ENCODE measurements at regions of chr9 and their contacts with region 1.

Region 1: GRCh38 chr9:37197158-37198038 is 77.0 kb downstream of the ZCCHC7 start:
- DNase-seq: peak in 4 of 9 donors; percentile 5 to 17 (median 14)
- ATAC-seq: peak; percentile 58
- H3K4me3 ChIP-seq: no peak overlapping the region
- H3K4me3 Mint-ChIP-seq: peak overlapping the region in 9 of 10 donors; percentile 12 to 72 (median 46)
- H3K27ac ChIP-seq: peak overlapping the region; percentile 22
- H3K27ac Mint-ChIP-seq: peak overlapping the region in 7 of 9 donors; percentile 2 to 93 (median 49)
- H3K4me1 ChIP-seq: peaks cover 0 to 19% of the 10 kb centered on the region in 2 donors
- H3K4me1 Mint-ChIP-seq: peaks cover 39 to 68% (median 59%) of the 10 kb centered on the region in 7 donors
- H3K27me3 ChIP-seq: no peaks in the 10 kb centered on the region
- H3K27me3 Mint-ChIP-seq: no peaks in the 10 kb centered on the region

Region 2: DNA sequence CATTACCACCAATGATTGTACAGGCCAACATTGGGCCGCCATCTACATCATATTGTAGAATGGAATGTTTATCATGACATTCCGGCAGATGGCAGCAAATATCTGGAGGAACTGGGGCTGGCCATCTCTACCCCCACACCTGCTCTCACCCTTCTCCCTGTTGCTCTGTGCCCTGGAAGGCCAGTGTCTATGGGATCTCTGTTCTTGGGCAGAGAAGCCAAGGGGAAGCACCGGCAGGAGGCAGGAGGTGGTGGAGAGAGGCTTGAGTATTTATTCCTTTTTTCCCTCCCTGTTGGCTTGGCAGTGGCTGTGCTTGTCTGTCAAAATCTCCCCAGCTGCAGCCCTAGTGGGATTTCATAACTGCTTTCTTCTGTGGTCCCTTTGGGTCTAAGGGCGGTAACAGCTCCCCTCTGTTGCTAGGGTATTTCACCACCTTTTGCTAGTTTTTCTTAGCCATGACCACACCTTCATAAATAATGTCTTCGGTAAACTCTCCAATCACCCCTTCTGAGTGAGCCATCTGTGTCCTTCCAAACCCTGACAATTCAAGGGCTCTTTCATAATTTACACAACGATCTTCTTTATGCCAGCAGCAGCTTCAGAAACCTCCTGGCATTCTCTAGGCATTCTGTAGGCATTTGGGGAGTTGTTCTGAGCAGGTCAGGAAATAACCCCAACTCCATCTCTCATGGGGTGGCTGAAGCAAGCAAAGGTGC is 398.9 kb before region 1 on chr9:
- CTCF ChIA-PET with region 1: no interaction called
- POLR2A ChIA-PET with region 1: no interaction called
- intact Hi-C with region 1: no loop called
- DNase-seq: no peak
- ATAC-seq: no peak
- H3K4me3 ChIP-seq: no peak overlapping the region
- H3K4me3 Mint-ChIP-seq: no peak overlapping the region
- H3K27ac ChIP-seq: no peak overlapping the region
- H3K27ac Mint-ChIP-seq: no peak overlapping the region
- H3K4me1 ChIP-seq: no peaks in the 10 kb centered on the region
- H3K4me1 Mint-ChIP-seq: no peaks in the 10 kb centered on the region
- H3K27me3 ChIP-seq: no peaks in the 10 kb centered on the region
- H3K27me3 Mint-ChIP-seq: peaks cover 4 to 31% (median 16%) of the 10 kb centered on the region in 5 donors

Region 3: DNA sequence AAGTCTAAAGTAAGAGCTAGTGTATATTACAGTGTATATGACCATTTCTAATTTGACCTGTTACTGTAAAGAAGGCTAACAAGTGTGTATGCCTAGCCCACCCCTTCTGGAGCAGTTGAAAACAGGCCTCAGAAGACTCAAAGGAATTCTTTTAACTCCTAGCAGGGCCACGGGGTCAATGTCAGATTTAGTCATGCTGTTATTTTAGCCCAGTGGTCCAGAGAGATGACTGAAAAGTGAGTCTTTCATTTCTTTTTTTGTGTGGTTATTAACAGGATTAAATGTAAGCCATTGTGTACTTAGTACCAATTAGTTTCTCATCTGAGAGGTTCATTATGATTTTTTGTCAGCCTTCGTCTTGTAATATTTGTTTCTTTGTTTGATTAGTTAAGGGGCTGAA is 52.6 kb before region 1 on chr9:
- CTCF ChIA-PET with region 1: interaction called, 3 read pairs
- POLR2A ChIA-PET with region 1: interaction called, 4 read pairs
- intact Hi-C with region 1: loop called in 1 of 2 experiments (anchors 5 kb)
- DNase-seq: no peak
- ATAC-seq: no peak
- H3K4me3 ChIP-seq: no peak overlapping the region
- H3K4me3 Mint-ChIP-seq: peak overlapping the region in 9 of 10 donors; percentile 8 to 77 (median 50)
- H3K27ac ChIP-seq: no peak overlapping the region
- H3K27ac Mint-ChIP-seq: peak overlapping the region in 8 of 9 donors; percentile 23 to 91 (median 83)
- H3K4me1 ChIP-seq: peaks cover 19 to 47% of the 10 kb centered on the region in 2 donors
- H3K4me1 Mint-ChIP-seq: peaks cover 21 to 89% (median 71%) of the 10 kb centered on the region in 7 donors
- H3K27me3 ChIP-seq: no peaks in the 10 kb centered on the region
- H3K27me3 Mint-ChIP-seq: no peaks in the 10 kb centered on the region

Region 4: DNA sequence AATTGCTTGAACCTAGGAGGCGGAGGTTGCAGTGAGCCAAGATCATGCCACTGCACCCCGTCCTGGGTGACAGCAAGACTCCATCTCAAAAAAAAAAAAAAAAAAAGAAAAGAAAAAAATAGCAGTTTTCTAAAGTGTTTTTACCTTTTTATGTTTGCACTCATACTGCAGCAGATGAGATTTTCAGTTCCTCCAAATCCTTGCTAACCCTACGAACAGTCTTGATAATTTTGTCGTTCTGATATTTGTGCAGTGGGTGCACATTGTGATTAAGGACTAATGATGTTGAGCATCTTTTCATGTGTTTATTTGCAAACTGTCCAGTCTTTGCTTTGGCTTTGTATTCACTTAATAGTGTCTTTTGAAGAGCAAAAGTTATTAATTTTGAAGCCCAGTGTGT is 34.1 kb before region 1 on chr9:
- CTCF ChIA-PET with region 1: no interaction called
- POLR2A ChIA-PET with region 1: no interaction called
- intact Hi-C with region 1: no loop called
- DNase-seq: no peak
- ATAC-seq: no peak
- H3K4me3 ChIP-seq: no peak overlapping the region
- H3K4me3 Mint-ChIP-seq: no peak overlapping the region
- H3K27ac ChIP-seq: no peak overlapping the region
- H3K27ac Mint-ChIP-seq: no peak overlapping the region
- H3K4me1 ChIP-seq: no peaks in the 10 kb centered on the region
- H3K4me1 Mint-ChIP-seq: peaks cover under 1 to 37% (median 21%) of the 10 kb centered on the region in 7 donors
- H3K27me3 ChIP-seq: no peaks in the 10 kb centered on the region
- H3K27me3 Mint-ChIP-seq: no peaks in the 10 kb centered on the region

Region 5: DNA sequence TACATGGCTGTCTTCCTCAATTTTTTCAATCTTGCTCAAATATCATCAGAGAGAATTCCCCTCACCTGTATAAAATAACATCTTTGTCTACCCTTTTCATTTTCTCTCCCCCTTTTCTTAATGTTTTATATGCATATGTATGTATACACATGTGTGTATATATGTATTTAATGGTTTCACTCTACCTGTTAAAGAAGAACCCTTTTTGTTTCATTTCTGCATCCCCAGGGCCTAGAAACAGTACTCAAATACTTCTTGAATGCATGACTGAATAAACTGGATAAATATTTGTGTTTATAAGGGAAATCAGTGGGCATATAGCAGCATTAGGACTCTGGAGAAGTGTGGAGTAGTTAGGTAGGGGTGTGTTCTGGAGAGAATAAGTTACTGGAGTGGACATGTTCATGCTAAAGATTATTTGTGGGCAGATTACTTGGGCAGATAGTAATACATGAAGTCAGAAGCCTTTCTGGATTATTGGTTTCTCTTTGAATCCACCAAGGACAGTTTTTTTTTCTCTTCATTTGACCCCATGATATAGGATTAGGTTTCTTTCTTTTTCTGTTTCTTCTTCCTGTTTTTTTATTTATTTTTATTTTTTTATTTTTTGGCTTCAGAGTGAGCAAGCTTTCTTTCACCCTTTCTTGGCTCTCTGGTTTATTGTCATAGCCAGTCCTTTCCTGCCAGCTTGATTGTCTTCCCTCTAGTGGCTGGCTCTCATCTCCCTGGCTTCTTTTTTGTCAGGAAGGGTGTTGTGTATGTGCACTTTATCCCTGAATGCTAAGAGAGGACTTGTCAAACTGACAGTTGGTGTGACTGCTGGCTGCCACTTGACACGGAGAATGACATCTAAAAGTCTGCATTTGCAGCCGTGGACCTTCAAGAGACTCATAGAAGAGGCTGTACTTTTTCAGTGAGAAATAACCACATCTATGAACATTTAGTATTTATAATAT is 12.3 kb after region 1 on chr9:
- CTCF ChIA-PET with region 1: interaction called, 3 read pairs
- POLR2A ChIA-PET with region 1: no interaction called
- intact Hi-C with region 1: loop called in 1 of 2 experiments (anchors 2 kb)
- DNase-seq: no peak
- ATAC-seq: no peak
- H3K4me3 ChIP-seq: no peak overlapping the region
- H3K4me3 Mint-ChIP-seq: peak overlapping the region in 2 of 10 donors; percentile 8 to 23
- H3K27ac ChIP-seq: no peak overlapping the region
- H3K27ac Mint-ChIP-seq: peak overlapping the region in 2 of 9 donors; percentile 4 to 58
- H3K4me1 ChIP-seq: no peaks in the 10 kb centered on the region
- H3K4me1 Mint-ChIP-seq: peaks cover 23 to 52% (median 39%) of the 10 kb centered on the region in 7 donors
- H3K27me3 ChIP-seq: no peaks in the 10 kb centered on the region
- H3K27me3 Mint-ChIP-seq: no peaks in the 10 kb centered on the region

Region 6: DNA sequence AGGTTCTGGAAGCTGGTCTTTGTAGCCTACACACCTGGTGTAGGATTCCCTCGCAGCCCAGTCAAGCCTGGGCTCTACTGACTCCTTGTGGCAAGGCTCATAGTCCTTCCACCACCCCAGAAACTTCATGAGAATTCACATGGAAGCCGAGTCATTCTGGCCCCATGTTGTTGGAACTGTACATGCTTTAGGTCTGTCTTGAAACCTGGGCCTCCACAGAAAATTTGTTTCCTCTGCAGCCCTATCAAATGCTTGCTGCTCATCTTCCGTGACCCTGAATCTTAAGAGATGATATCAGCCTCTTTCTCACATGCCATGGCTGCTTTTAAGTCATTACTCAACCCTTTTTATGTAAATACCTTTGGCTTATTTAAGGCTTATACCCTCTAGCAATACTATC is 111.7 kb after region 1 on chr9:
- CTCF ChIA-PET with region 1: interaction called, 5 read pairs
- POLR2A ChIA-PET with region 1: no interaction called
- intact Hi-C with region 1: loop called in 1 of 2 experiments (anchors 10 kb)
- DNase-seq: peak in 3 of 9 donors; percentile 12 to 19 (median 18)
- ATAC-seq: peak; percentile 41
- H3K4me3 ChIP-seq: no peak overlapping the region
- H3K4me3 Mint-ChIP-seq: no peak overlapping the region
- H3K27ac ChIP-seq: no peak overlapping the region
- H3K27ac Mint-ChIP-seq: no peak overlapping the region
- H3K4me1 ChIP-seq: no peaks in the 10 kb centered on the region
- H3K4me1 Mint-ChIP-seq: peaks cover 0 to 10% (median 0%) of the 10 kb centered on the region in 7 donors
- H3K27me3 ChIP-seq: no peaks in the 10 kb centered on the region
- H3K27me3 Mint-ChIP-seq: no peaks in the 10 kb centered on the region

Measured in naive thymus-derived CD4-positive, alpha-beta T cell (primary cell).